ENCODE measurements at regions of chr9 and their contacts with region 1.

Region 1: GRCh38 chr9:72038890-72039410 is 21.5 kb downstream of the C9orf57 start:
- ATAC-seq: peak; percentile 50 to 92 (median 79)
- H3K4me3 ChIP-seq: no peak overlapping the region
- H3K27ac ChIP-seq: no peak overlapping the region
- H3K4me1 ChIP-seq: no peaks in the 10 kb centered on the region

Region 2: DNA sequence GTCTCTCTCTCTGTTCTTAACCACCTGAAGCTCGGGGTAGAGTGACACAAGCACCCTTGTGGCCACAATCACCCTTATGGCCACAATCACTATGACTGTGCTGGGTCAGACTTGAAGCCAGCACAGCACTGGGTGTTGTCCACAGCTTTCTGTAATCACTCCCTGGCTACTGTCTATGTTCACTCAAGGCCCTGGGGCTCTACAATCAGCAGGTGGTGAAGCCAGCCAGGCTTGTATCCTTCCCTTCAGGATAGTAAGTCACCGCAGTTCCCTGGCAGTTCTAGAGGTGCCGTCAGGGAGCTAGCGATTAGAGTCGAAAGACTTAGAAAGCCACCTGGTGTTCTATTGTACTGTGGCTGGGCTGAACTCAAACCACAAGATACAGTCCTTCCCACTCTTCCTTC is 154.5 kb after region 1 on chr9:
- in situ Hi-C with region 1: loop called in 1 of 9 experiments (anchors 25 kb)
- ATAC-seq: peak in 2 of 8 experiments; percentile 43 to 57
- H3K4me3 ChIP-seq: no peak overlapping the region
- H3K27ac ChIP-seq: no peak overlapping the region
- H3K4me1 ChIP-seq: no peaks in the 10 kb centered on the region

Region 3: DNA sequence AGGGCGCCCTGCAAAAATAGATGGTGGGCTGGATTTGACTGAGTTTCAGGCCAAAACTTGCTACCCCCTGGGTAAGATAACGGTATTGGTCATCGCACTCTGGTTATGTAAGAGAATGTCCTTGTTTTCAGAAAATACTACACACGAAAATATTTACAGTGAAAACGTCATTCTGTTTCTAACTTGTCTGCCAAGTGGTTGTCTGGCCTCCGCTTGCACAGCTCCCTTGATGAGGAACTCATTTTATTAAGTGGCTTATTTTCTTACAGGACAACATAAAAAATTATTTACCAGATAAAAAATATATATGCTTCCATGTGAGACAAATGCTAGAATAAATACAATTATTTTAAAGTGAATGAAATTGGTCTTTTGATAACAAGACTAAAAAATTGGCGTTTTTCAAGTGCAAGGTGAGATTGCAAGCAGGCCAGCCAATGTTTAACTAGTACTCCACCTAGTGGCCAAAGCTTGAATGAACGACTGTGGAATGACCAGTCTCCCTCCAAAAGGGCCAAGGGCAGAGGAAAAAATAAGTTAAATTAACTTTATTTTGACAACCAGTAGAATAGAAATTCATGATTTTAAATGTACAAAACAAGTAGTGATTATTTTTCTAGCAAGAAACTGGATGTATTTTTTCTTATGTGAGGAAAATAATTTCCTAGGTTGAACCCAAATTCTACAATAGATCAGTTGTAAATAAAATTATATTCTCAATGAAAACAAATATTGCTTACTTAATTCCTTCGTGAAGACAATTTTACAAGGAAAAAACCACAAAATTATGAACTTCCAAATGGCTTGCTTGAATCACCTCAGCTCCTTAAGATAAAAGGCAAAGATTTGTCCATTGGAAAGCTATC is 232.9 kb after region 1 on chr9:
- in situ Hi-C with region 1: loop called in 4 of 9 experiments (anchors 10 to 25 kb)
- ATAC-seq: peak in 5 of 8 experiments; percentile 37 to 78 (median 57)
- H3K4me3 ChIP-seq: no peak overlapping the region
- H3K27ac ChIP-seq: no peak overlapping the region
- H3K4me1 ChIP-seq: peaks cover 0 to 3% of the 10 kb centered on the region in 2 donors

Region 4: DNA sequence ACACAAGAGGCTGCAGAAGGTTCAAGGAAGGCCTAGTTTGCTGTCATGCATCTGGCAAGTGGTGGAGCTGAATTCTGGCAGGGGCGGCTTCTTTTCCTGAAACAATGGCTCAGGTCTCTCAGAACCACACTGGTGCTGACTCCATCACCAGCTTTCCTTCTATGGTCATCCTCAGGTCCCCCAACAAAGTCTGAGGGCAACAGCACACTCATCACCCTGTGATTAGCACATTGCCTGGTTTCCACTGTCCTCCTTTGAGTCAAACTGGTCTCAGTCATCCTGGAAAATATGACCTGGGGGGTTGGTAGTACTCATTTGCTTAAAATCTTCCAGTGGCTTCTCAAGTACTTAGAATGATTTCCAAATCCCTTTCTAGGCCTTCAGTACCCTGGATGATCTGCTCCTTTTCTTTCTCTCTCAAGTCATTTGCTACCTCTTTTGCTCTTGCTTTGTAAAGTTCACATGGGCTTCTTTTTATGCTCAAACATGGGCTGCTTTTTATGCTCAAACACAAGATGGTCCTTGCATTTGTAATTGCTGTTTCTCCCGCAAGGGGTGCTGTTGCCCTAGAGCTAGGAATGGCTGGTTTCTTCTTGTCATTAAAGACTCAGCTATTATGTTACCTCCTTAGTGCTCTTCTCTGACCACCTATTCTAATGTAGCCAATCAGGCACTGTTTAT is 769.0 kb after region 1 on chr9:
- in situ Hi-C with region 1: loop called in 3 of 9 experiments (anchors 25 kb)
- ATAC-seq: peak in 1 of 8 experiments; percentile 29
- H3K4me3 ChIP-seq: no peak overlapping the region
- H3K27ac ChIP-seq: no peak overlapping the region
- H3K4me1 ChIP-seq: peaks cover 0 to 6% of the 10 kb centered on the region in 2 donors

Region 5: GRCh38 chr9:73183917-73184861 is 1145.2 kb after region 1 on chr9:
- in situ Hi-C with region 1: loop called in 2 of 9 experiments (anchors 25 kb)
- ATAC-seq: no peak
- H3K4me3 ChIP-seq: no peak overlapping the region
- H3K27ac ChIP-seq: no peak overlapping the region
- H3K4me1 ChIP-seq: no peaks in the 10 kb centered on the region

Measured in motor neuron (in vitro differentiated cells).